Activated T-helper 1 cell treated with anti-CD3 and anti-CD28 coated beads, Interleukin-12 subunit alpha, Interleukin-12 subunit beta, Interleukin-2, Interleukin-4 antibody, amounts not matched to agents 30 ng/mL and 10 ng/mL and 1 ng/mL, durations not matched to agents 14 hours and 24 hours and 36 hours (primary cell): ENCODE measurements at regions of chr1 and their contacts with region 1.

Region 1: GRCh38 chr1:172818841-172819527 is 160.1 kb downstream of the FASLG start:
- DNase-seq: peak; percentile 37
- H3K4me3 Mint-ChIP-seq: peak overlapping the region; percentile 59
- H3K27ac Mint-ChIP-seq: peak overlapping the region; percentile 78
- H3K4me1 Mint-ChIP-seq: peaks cover 47% of the 10 kb centered on the region
- H3K27me3 Mint-ChIP-seq: peaks cover 5% of the 10 kb centered on the region

Region 2: GRCh38 chr1:172154551-172154950 is 664.4 kb before region 1 on chr1:
- intact Hi-C with region 1: no loop called
- DNase-seq: no peak
- H3K4me3 Mint-ChIP-seq: peak overlapping the region; percentile 23
- H3K27ac Mint-ChIP-seq: peak overlapping the region; percentile 87
- H3K4me1 Mint-ChIP-seq: peaks cover 7% of the 10 kb centered on the region
- H3K27me3 Mint-ChIP-seq: peaks cover 3% of the 10 kb centered on the region

Region 3: DNA sequence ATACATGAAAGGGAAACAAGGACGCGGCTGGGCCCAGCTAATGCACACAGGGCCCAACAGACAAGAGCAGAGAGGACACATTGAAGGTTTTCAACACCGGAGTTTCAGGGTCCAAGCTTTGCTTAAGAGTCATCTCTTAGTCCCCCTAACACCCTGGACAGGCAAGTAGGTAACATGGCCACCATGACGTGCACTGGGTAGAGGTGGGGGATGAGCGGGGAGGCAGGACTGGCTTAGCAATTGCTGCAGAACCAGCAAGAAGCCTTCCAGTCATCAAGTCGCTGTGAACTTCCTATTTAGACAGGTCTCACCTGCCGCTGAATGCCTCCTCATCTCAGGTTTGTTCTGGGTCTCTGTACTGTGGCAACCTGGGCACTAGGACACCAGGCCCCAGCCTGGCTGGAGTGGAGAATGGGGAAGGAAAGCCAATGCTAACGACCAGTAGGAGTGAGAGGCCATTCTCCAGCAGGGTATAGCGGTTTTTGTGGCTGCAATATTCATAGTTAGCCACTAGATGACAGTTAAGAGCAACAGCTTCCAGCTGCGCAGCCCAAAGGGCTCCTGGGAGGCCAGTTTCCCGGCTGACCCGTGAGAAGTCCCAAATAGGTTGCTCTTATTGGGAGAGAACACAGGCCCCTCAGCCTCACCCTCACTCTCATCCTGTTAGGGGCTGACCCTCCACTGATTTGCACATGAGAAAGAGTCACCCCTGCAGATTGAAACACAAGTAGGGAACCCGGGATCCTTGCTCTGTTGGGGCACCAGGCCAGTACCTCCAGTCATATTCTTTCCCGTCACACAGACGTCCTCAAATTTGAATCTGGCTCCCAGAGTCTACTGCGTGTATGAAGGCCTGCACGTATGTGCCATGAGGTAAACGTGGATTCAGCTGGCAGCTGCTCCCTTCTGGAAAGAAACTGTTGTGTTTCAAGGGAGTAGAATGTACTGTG is 369.1 kb before region 1 on chr1:
- intact Hi-C with region 1: loop called (anchors 5 kb)
- DNase-seq: peak; percentile 30
- H3K4me3 Mint-ChIP-seq: peak overlapping the region; percentile 43
- H3K27ac Mint-ChIP-seq: no peak overlapping the region
- H3K4me1 Mint-ChIP-seq: peaks cover 40% of the 10 kb centered on the region
- H3K27me3 Mint-ChIP-seq: peaks cover 2% of the 10 kb centered on the region

Region 4: GRCh38 chr1:172778456-172779455 is 40.2 kb before region 1 on chr1:
- intact Hi-C with region 1: loop called (anchors 1 kb)
- DNase-seq: no peak
- H3K4me3 Mint-ChIP-seq: no peak overlapping the region
- H3K27ac Mint-ChIP-seq: no peak overlapping the region
- H3K4me1 Mint-ChIP-seq: peaks cover 11% of the 10 kb centered on the region
- H3K27me3 Mint-ChIP-seq: peaks cover 21% of the 10 kb centered on the region

Region 5: DNA sequence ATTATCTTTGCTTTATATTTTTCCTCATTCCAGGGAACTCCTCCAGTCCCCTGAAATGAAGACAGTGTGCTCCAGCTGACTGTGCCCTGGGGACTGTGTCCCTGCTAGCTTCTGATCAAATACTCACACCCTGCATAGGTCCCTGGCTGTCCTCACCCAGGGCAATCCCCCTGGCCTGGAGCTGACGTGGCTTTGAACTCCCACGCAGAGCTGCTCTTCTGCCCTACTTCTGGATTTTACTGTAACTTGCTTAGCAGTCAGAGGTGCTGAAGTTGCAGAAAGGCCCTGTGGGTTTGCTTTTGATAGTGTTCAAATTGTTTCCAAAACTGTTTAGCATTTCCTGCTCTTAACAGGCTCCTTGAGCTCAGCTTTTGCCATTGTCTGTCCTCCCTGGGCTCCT is 26.4 kb after region 1 on chr1:
- intact Hi-C with region 1: loop called (anchors 1 kb)
- DNase-seq: peak; percentile 44
- H3K4me3 Mint-ChIP-seq: peak overlapping the region; percentile 23
- H3K27ac Mint-ChIP-seq: peak overlapping the region; percentile 44
- H3K4me1 Mint-ChIP-seq: peaks cover 33% of the 10 kb centered on the region
- H3K27me3 Mint-ChIP-seq: peaks cover 45% of the 10 kb centered on the region

Region 6: GRCh38 chr1:172969611-172970010 is 150.6 kb after region 1 on chr1:
- intact Hi-C with region 1: loop called (anchors 1 kb)
- DNase-seq: no peak
- H3K4me3 Mint-ChIP-seq: no peak overlapping the region
- H3K27ac Mint-ChIP-seq: no peak overlapping the region
- H3K4me1 Mint-ChIP-seq: peaks cover 10% of the 10 kb centered on the region
- H3K27me3 Mint-ChIP-seq: peaks cover 15% of the 10 kb centered on the region

Region 7: GRCh38 chr1:173202430-173203145 is 383.6 kb after region 1 on chr1:
- intact Hi-C with region 1: loop called (anchors 2 kb)
- DNase-seq: no peak
- H3K4me3 Mint-ChIP-seq: no peak overlapping the region
- H3K27ac Mint-ChIP-seq: no peak overlapping the region
- H3K4me1 Mint-ChIP-seq: peaks cover 47% of the 10 kb centered on the region
- H3K27me3 Mint-ChIP-seq: peaks cover 16% of the 10 kb centered on the region